Activated CD4-positive, alpha-beta T cell treated with anti-CD3 and anti-CD28 coated beads for 36 hours (primary cell): ENCODE measurements at regions of chr2 and their contacts with region 1.

Region 1: GRCh38 chr2:37026050-37026449 is 58.1 kb downstream of the HEATR5B start:
- DNase-seq: peak; percentile 24
- ATAC-seq: no peak
- H3K4me3 Mint-ChIP-seq: no peak overlapping the region
- H3K27ac Mint-ChIP-seq: no peak overlapping the region
- H3K4me1 Mint-ChIP-seq: no peaks in the 10 kb centered on the region
- H3K27me3 Mint-ChIP-seq: no peaks in the 10 kb centered on the region

Region 2: DNA sequence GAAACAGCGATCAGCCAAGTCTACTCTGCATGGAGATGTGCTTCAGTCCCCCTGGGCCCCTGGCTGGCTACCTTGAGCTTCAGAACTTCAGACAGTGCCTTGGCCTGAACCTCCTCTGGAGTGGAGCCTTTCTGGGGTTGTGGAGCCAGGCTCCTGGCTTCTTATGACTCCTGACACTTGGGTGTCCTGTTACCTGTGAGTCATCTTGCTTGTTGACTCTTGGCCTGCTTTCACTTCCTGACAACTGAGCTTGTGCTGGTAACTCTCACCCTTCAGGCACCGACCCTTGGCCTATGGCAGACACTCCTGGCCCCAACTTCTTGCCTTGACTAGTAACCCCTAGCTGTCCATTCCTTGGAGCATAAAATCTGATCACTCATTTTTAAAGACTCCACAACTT is 376.0 kb before region 1 on chr2:
- CTCF ChIA-PET with region 1: no interaction called
- POLR2A ChIA-PET with region 1: no interaction called
- intact Hi-C with region 1: no loop called
- DNase-seq: peak; percentile 41
- ATAC-seq: peak; percentile 93
- H3K4me3 Mint-ChIP-seq: no peak overlapping the region
- H3K27ac Mint-ChIP-seq: no peak overlapping the region
- H3K4me1 Mint-ChIP-seq: no peaks in the 10 kb centered on the region
- H3K27me3 Mint-ChIP-seq: peaks cover 2% of the 10 kb centered on the region

Region 3: DNA sequence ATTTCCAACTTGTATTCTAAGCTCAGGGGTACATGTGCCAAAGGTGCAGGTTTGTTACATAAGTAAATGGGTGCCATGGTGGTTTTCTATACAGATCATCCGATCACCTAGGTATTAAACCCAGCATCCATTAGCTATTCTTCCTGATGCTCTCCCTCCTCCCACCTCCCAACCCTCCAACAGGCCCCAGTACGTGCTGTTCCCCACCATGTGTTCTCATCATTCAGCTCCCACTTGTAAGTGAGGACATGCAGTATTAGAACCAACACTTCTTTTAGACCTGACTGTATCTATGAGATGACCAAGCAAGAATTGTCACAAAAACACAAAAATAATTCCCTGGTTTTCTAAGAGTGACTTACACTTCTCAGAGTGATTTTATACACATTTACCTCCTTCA is 246.6 kb before region 1 on chr2:
- CTCF ChIA-PET with region 1: no interaction called
- POLR2A ChIA-PET with region 1: no interaction called
- intact Hi-C with region 1: loop called in 1 of 2 experiments (anchors 1 kb)
- DNase-seq: no peak
- ATAC-seq: no peak
- H3K4me3 Mint-ChIP-seq: no peak overlapping the region
- H3K27ac Mint-ChIP-seq: no peak overlapping the region
- H3K4me1 Mint-ChIP-seq: no peaks in the 10 kb centered on the region
- H3K27me3 Mint-ChIP-seq: peaks cover 10% of the 10 kb centered on the region

Region 4: DNA sequence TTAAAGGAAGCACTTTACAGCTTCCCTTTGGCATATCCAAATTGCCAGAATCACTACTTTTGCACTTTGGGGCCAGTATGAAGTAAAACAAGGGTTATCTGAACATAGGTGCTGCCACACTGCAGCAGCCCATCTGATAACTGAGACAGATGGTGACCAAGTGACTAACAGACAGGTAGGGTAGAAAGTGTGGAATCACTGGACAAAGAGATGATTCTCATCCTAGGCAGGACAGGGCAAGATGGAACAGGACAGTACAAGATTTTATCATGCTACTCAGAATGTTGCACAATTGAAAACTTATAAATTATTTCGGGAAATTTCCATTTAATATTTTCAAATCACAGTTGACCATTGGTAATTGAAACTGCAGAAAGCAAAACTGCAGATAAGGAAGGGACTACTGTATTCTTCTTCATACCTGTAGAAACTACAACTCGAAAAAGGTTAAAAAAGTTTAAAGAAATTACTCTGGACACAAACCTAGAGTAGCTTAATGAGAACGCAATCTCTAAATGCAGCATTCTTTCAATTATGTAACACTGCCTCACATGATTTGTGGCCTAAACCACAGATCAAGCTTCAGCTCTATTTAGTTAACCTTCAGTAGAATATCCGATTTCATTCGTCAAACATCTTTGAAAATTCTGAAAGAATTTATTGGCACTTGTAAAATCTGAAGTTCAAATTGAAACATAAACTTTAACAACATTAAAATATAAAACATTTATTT is 26.7 kb after region 1 on chr2:
- CTCF ChIA-PET with region 1: no interaction called
- POLR2A ChIA-PET with region 1: no interaction called
- intact Hi-C with region 1: no loop called
- DNase-seq: no peak
- ATAC-seq: no peak
- H3K4me3 Mint-ChIP-seq: no peak overlapping the region
- H3K27ac Mint-ChIP-seq: no peak overlapping the region
- H3K4me1 Mint-ChIP-seq: no peaks in the 10 kb centered on the region
- H3K27me3 Mint-ChIP-seq: no peaks in the 10 kb centered on the region